Endothelial cell of umbilical vein (primary cell): ENCODE measurements at regions of chr12 and their contacts with region 1.

Region 1: DNA sequence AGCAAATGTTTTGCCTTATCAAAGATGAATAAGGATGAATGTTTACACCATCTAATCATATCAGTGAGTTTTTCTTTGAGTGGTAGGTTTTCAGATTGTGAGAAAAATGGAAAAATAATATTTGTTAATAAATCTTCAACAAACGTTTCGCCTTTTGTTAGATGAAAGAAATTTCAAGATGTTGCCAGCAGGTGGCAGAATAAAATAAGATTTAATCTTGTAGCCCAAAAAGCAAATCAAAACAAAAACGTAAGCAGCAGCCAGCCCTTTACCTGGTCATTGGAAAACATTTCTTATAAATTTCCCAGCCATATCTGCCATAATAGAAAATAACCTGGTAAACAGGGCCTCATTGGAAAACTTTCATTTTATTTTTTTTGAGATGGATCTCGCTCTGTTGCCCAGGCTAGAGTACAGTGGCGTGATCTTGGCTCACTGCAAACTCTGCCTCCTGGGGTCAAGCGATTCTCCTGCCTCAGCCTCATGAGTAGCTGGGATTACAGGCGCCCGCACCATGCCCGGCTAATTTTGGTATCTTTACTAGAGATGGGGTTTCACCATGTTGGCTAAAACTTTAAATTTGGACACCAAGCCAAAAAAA is 15.4 kb upstream of the TMEM120B start:
- DNase-seq: peak; percentile 62
- H3K4me3 ChIP-seq: no peak overlapping the region
- H3K27ac ChIP-seq: no peak overlapping the region
- H3K4me1 ChIP-seq: no peaks in the 10 kb centered on the region
- H3K27me3 ChIP-seq: peaks cover under 1 to 3% of the 10 kb centered on the region in 2 experiments
- CTCF ChIP-seq: peak in 1 of 2 donors; percentile 19
- POLR2A ChIP-seq: no peak

Region 2: DNA sequence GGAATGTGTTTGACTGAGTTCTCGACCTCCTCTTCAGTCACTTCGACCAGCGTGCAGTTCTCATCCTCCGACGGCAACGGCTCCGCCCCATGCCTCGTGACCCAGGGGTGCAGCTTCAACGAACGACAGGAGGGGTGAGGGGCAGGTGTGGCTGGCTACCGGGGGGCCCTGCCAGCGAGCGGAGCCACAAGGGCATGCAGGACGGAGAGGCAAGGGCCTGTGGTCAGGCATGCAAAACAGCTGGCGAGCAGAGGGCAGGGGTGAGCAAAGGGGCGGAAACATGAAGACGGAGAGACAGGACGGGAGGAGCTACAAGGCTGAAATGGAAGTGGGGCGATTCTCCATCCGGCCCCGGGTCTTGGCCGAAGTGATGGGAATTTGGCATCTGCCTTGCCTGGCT is 448.6 kb before region 1 on chr12:
- CTCF ChIA-PET with region 1: no interaction called
- POLR2A ChIA-PET with region 1: no interaction called
- dilution Hi-C with region 1: no loop called
- intact Hi-C with region 1: no loop called
- DNase-seq: no peak
- H3K4me3 ChIP-seq: no peak overlapping the region
- H3K27ac ChIP-seq: no peak overlapping the region
- H3K4me1 ChIP-seq: no peaks in the 10 kb centered on the region
- H3K27me3 ChIP-seq: no peaks in the 10 kb centered on the region
- CTCF ChIP-seq: no peak
- POLR2A ChIP-seq: no peak

Region 3: GRCh38 chr12:121494093-121494787 is 203.0 kb before region 1 on chr12:
- CTCF ChIA-PET with region 1: no interaction called
- POLR2A ChIA-PET with region 1: no interaction called
- dilution Hi-C with region 1: no loop called
- intact Hi-C with region 1: no loop called
- DNase-seq: peak; percentile 31
- H3K4me3 ChIP-seq: no peak overlapping the region
- H3K27ac ChIP-seq: no peak overlapping the region
- H3K4me1 ChIP-seq: no peaks in the 10 kb centered on the region
- H3K27me3 ChIP-seq: no peaks in the 10 kb centered on the region
- CTCF ChIP-seq: peak; percentile 82 to 94
- POLR2A ChIP-seq: no peak

Region 4: DNA sequence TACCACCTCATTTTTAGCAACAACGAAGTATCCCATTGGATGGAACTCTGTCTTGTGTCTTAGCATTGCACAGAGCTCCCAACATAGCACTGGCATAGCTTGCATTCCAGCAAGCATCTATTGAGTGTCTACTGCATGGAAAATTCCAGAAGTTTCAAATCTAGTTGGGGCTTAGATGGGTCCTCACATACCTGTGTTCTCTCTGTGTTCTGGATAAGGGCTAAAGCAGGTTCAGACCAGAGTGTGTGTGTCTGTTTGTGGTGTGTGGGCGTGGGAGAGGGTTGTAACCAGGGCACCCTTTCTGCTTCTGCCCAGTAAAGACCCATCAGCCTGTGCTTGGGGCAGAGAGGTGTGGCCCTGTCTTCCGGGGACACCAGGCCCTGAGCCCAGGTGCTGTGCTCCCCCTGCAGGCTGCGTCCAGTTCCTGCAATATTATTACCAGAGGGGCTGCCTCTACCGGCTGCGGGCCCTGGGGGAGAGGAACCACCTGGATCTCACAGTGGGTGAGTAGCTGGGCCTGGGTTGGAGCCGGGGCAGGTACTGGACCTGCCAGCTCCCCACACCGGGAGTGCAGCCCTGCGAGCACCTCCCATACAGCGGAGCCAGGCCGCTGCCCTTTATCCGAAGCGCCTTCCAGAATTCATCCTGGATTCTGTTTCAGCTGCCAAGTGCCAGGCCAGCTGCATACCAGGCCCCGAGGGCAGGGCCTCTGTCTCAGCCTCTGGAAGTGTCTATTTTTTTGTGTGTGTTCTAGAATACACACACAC is 76.0 kb after region 1 on chr12:
- CTCF ChIA-PET with region 1: interaction called, 14 read pairs
- POLR2A ChIA-PET with region 1: no interaction called
- dilution Hi-C with region 1: no loop called
- intact Hi-C with region 1: loop called (anchors 1 kb)
- DNase-seq: peak; percentile 40
- H3K4me3 ChIP-seq: no peak overlapping the region
- H3K27ac ChIP-seq: no peak overlapping the region
- H3K4me1 ChIP-seq: no peaks in the 10 kb centered on the region
- H3K27me3 ChIP-seq: no peaks in the 10 kb centered on the region
- CTCF ChIP-seq: peak; percentile 80
- POLR2A ChIP-seq: no peak